Ovary (tissue), 10 donors: ENCODE measurements at regions of chr4 and their contacts with region 1.

Region 1: DNA sequence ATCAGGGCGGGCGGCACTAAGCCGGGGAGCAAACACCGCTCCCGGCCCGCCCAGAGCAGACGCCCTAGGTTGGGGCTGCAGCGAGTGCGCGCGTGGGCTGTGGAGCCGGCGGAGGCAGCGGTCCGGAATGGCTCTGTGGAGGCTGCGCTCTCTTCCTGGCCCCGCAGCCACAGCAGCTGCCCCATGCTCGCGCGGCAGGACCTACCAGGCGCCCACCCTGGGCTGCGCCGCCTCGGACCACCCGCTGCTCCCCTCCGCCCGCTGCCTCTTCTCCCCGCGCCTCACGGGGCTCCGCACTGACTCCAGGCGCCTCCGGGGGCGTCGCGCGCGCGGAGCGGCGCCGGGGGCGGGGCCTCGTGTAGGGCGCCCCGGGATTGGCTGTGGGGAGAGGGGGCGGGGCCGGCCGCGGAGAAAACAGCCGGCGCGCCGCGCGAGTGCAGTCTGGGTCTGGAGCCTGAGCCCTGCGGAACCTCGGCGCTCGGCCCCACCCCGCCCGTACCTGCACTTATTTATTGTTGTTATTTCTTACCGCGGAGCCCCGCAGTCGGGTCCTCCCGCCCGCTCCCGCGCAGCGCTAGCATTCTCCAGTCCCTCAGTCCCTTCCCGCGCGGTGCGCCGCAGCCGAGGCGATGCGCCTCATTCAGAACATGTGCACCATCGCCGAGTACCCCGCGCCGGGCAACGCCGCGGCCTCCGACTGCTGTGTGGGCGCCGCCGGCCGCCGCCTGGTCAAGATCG is at the start of gene RASL11B:
- DNase-seq: peak; percentile 88 to 94 (median 89)
- H3K4me3 ChIP-seq: peak within 1 kb of the TSS; percentile 85
- H3K27ac ChIP-seq: peak within 1 kb of the TSS; percentile 36 to 81
- H3K4me1 ChIP-seq: peaks cover 6% of the 10 kb centered on the region
- H3K27me3 ChIP-seq: no peaks in the 10 kb centered on the region
- CTCF ChIP-seq: peak; percentile 20 to 80 (median 67)
- EP300 ChIP-seq: no peak
- POLR2A ChIP-seq: peak; percentile 57
- total RNA-seq, gene RASL11B: 15.3 to 166 (median 82.0) TPM

Region 2: GRCh38 chr4:52560844-52561280 is 301.2 kb before region 1 on chr4:
- intact Hi-C with region 1: loop called in 1 of 4 experiments (anchors 10 kb)
- DNase-seq: no peak
- H3K4me3 ChIP-seq: no peak overlapping the region
- H3K27ac ChIP-seq: no peak overlapping the region
- H3K4me1 ChIP-seq: peaks cover 3% of the 10 kb centered on the region
- H3K27me3 ChIP-seq: no peaks in the 10 kb centered on the region
- CTCF ChIP-seq: no peak
- EP300 ChIP-seq: no peak
- POLR2A ChIP-seq: no peak

Region 3: GRCh38 chr4:52659001-52659721 is 202.9 kb before region 1 on chr4 and contains the start of gene USP46:
- intact Hi-C with region 1: loop called in 1 of 4 experiments (anchors 10 kb)
- DNase-seq: peak; percentile 73 to 84 (median 82)
- H3K4me3 ChIP-seq: peak within 1 kb of the TSS; percentile 83
- H3K27ac ChIP-seq: peak within 1 kb of the TSS; percentile 86 to 92
- H3K4me1 ChIP-seq: peaks cover 11% of the 10 kb centered on the region
- H3K27me3 ChIP-seq: no peaks in the 10 kb centered on the region
- CTCF ChIP-seq: no peak
- EP300 ChIP-seq: no peak
- POLR2A ChIP-seq: peak; percentile 40
- total RNA-seq, gene USP46: 10.3 to 51.6 (median 34.9) TPM

Region 4: DNA sequence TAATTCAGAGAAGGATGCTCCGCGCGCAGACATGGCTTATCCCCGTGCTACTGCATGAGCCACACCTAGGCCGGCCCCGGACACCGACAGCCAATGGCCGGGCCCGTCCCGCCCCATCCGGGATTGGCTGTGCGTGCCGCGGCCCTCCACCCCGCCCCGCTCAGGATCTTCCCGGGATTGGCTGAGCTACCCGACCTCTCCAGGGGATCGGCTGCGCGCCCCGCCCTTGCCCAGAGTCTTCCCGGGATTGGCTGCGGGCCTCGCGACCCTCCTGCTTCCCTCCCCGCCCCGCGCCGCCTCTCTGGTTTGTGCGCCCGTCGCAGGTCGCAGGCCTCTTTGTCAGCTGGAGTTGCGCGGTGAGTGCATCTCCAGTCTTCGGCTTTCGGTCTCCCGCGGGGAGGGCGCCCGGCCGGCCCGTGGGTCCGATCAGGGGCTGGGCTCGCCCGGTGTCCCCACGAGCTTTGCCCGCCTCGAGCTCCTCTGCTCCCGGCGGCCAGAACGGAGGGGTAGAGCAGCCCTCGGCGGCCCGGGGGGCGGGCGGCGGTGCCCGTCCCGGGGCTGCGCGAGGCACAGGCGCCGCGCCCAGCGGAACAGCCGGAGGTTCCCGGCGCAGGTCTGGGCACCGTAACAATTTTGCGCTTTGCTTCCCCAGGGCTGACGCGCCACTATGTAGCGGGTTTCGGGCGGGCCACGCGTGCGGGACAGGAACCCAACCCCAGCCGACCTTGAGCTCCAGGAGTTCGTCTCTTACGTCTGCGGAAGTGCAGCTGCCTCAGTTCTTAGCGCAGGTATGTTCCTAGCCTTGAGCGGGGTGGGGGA is 149.7 kb before region 1 on chr4:
- intact Hi-C with region 1: loop called in 1 of 4 experiments (anchors 2 kb)
- DNase-seq: peak; percentile 98 to 99 (median 98)
- H3K4me3 ChIP-seq: peak overlapping the region; percentile 95
- H3K27ac ChIP-seq: peak overlapping the region; percentile 82 to 91
- H3K4me1 ChIP-seq: peaks cover 11% of the 10 kb centered on the region
- H3K27me3 ChIP-seq: no peaks in the 10 kb centered on the region
- CTCF ChIP-seq: no peak
- EP300 ChIP-seq: no peak
- POLR2A ChIP-seq: peak; percentile 84

Region 5: GRCh38 chr4:52721968-52722815 is 139.9 kb before region 1 on chr4:
- intact Hi-C with region 1: loop called in 2 of 4 experiments (anchors 5 kb)
- DNase-seq: peak; percentile 92 to 94 (median 93)
- H3K4me3 ChIP-seq: peak overlapping the region; percentile 61
- H3K27ac ChIP-seq: peak overlapping the region; percentile 82 to 85
- H3K4me1 ChIP-seq: no peaks in the 10 kb centered on the region
- H3K27me3 ChIP-seq: no peaks in the 10 kb centered on the region
- CTCF ChIP-seq: no peak
- EP300 ChIP-seq: no peak
- POLR2A ChIP-seq: peak; percentile 45

Region 6: DNA sequence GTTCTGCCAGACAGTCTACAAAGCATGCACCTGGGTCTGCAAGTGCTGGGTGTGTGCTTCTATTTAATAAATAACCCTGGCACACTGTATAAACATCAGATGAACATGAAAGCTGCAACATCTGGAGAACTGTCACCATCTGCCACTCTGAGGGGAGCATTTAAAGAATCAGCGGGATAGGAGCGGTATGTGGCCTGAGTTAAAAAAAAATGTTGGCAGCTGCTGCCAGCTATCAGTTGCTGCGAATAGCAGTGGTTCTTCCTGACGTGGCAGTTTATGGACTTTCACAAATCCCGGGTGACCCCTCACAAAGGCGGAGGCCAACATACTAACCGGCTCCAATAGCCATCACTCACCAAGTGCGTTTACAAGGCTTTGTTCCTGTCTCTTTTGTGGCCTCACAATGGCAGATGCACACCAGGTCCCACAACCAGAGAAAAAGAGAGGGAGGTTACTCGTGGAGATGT is 95.2 kb after region 1 on chr4:
- intact Hi-C with region 1: loop called in 2 of 4 experiments (anchors 10 kb)
- DNase-seq: peak in 4 of 5 donors; percentile 32 to 69 (median 49)
- H3K4me3 ChIP-seq: no peak overlapping the region
- H3K27ac ChIP-seq: no peak overlapping the region
- H3K4me1 ChIP-seq: peaks cover 21% of the 10 kb centered on the region
- H3K27me3 ChIP-seq: no peaks in the 10 kb centered on the region
- CTCF ChIP-seq: no peak
- EP300 ChIP-seq: no peak
- POLR2A ChIP-seq: no peak

Region 7: GRCh38 chr4:52983563-52984303 is 121.7 kb after region 1 on chr4:
- intact Hi-C with region 1: loop called in 2 of 4 experiments (anchors 2 to 10 kb)
- DNase-seq: no peak
- H3K4me3 ChIP-seq: no peak overlapping the region
- H3K27ac ChIP-seq: peak overlapping the region; percentile 10 to 41
- H3K4me1 ChIP-seq: peaks cover 13% of the 10 kb centered on the region
- H3K27me3 ChIP-seq: no peaks in the 10 kb centered on the region
- CTCF ChIP-seq: peak; percentile 21 to 63 (median 58)
- EP300 ChIP-seq: no peak
- POLR2A ChIP-seq: no peak